Panc1 (cell line): ENCODE measurements at regions of chr6 and their contacts with region 1.

Region 1: GRCh38 chr6:123715006-123715875 is 78.5 kb upstream of the TRDN start:
- DNase-seq: peak; percentile 15
- ATAC-seq: no peak
- H3K4me3 ChIP-seq: no peak overlapping the region
- H3K27ac ChIP-seq: no peak overlapping the region
- H3K4me1 ChIP-seq: no peaks in the 10 kb centered on the region
- H3K27me3 ChIP-seq: 0 out of 2 replicates have a peak, but pooled peaks cover 2% of the 10 kb centered on the region
- CTCF ChIP-seq: peak; percentile 69

Region 2: DNA sequence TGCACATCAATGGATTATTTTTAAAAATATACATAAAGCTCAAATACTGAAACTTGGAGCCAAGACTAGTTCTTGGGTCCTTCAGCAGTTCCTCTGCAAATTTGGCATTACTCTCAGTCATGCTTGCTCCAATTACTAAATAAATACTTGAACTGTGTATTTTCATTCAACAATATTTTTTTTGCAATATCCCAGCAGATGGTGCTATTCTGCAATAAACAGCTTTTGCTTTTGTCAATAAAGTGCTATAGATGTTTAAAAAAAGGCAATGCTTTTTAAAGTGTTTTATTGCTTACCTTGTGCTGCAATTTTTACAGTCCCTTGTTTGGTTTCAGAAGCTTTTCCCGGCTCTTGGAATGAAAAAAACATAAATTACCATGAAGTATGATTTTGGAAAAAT is 321.9 kb before region 1 on chr6:
- CTCF ChIA-PET with region 1: no interaction called
- POLR2A ChIA-PET with region 1: no interaction called
- in situ Hi-C with region 1: no loop called
- intact Hi-C with region 1: loop called (anchors 2 kb)
- DNase-seq: no peak
- ATAC-seq: no peak
- H3K4me3 ChIP-seq: no peak overlapping the region
- H3K27ac ChIP-seq: no peak overlapping the region
- H3K4me1 ChIP-seq: no peaks in the 10 kb centered on the region; the same call in 1 of the 2 replicates
- H3K27me3 ChIP-seq: no peaks in the 10 kb centered on the region; the same call in 1 of the 2 replicates
- CTCF ChIP-seq: peak; percentile 65; the same call in 1 of the 2 replicates

Region 3: DNA sequence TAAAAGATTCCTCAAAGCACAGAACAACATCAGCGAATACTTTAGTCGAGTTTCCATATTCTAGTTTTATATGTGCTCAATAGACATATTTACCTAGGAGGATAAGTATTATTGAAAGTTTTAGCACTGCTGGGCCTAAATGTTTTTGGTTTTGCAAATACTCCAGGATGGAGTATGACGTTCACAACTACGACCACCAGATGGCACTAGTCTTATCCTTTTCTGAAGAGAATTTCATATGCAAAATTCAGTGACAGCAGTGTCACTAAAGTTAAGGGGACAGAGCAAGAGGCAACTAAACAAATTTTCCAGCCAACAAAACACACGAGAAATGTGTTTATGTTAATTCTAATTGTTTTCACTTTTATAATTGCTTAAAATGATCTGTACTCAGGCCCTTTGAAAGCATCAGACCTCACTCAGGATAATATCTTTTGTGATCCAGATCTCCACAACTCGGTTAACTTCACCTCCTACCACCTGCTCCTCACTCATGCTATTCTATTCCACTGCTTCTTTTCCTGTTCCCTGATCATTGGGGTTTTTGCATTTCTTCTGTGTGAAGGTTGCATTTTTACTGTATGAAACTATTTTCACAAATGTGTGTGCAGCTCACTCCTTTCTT is 299.3 kb before region 1 on chr6:
- CTCF ChIA-PET with region 1: interaction called, 9 read pairs
- POLR2A ChIA-PET with region 1: no interaction called
- in situ Hi-C with region 1: no loop called
- intact Hi-C with region 1: loop called (anchors 2 kb)
- DNase-seq: peak; percentile 33
- ATAC-seq: peak; percentile 70
- H3K4me3 ChIP-seq: no peak overlapping the region
- H3K27ac ChIP-seq: no peak overlapping the region
- H3K4me1 ChIP-seq: no peaks in the 10 kb centered on the region
- H3K27me3 ChIP-seq: peaks cover 2% of the 10 kb centered on the region; the same call in 1 of the 2 replicates
- CTCF ChIP-seq: peak; percentile 79

Region 4: DNA sequence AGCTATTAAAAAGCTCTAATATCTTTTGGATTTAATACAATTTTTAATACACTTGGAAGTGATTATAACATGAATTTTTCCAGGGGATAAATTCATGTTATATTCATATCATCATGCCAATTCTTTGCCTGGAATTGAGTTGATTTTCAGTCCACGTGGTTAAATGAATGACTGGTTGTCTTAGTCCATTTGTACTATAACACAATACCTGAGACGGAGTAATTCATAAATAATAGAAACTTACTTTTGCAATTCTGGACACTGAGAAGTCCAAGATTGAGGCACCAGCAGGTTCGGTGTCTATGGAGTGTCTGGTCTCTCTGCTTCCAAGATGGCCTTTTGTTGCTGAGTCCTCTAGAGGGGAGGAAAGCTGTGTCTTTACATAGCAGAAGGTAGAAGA is 12.3 kb before region 1 on chr6:
- CTCF ChIA-PET with region 1: interaction called, 3 read pairs
- POLR2A ChIA-PET with region 1: interaction called, 11 read pairs
- in situ Hi-C with region 1: no loop called
- intact Hi-C with region 1: no loop called
- DNase-seq: no peak
- ATAC-seq: no peak
- H3K4me3 ChIP-seq: no peak overlapping the region
- H3K27ac ChIP-seq: no peak overlapping the region
- H3K4me1 ChIP-seq: no peaks in the 10 kb centered on the region
- H3K27me3 ChIP-seq: no peaks in the 10 kb centered on the region
- CTCF ChIP-seq: no peak